Transverse colon (tissue), 4 donors: ENCODE measurements at regions of chr2 and their contacts with region 1.

Region 1: DNA sequence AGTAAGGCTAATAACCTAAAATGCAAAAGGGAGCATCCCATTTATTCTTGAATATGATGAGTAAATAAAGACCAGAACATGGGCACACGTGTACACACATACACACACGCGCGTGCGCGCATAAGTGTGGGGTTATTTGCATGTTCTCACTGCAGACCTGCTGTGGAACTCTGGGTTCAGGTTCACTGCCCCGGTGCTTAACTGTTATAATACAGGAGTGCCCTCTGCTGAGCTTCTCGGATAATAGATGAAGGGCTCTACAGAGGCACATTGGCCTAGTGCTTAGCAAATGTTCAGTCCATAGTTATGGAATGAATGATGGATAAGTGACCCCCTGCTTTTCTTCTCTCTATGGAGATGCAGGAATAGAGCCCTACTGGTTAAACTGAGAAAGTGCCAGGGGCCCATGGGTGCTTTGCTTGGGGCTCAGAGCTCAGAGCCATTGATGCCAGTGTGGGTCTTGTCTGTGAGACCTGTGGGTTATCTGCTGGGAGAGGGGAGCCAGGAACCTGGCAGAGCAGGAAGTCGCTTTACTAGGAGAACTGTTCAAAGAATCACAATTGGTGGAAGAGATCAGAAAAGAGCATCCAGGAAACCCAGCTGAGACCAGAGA is 3.6 kb upstream of the ARL4C start:
- DNase-seq: peak; percentile 66
- H3K4me3 ChIP-seq: no peak overlapping the region
- H3K27ac ChIP-seq: no peak overlapping the region
- H3K4me1 ChIP-seq: peaks cover under 1 to 14% (median 8%) of the 10 kb centered on the region in 4 donors
- H3K27me3 ChIP-seq: peaks cover 15% of the 10 kb centered on the region
- CTCF ChIP-seq: peak; percentile 48 to 57 (median 54)
- EP300 ChIP-seq: no peak
- POLR2A ChIP-seq: no peak

Region 2: DNA sequence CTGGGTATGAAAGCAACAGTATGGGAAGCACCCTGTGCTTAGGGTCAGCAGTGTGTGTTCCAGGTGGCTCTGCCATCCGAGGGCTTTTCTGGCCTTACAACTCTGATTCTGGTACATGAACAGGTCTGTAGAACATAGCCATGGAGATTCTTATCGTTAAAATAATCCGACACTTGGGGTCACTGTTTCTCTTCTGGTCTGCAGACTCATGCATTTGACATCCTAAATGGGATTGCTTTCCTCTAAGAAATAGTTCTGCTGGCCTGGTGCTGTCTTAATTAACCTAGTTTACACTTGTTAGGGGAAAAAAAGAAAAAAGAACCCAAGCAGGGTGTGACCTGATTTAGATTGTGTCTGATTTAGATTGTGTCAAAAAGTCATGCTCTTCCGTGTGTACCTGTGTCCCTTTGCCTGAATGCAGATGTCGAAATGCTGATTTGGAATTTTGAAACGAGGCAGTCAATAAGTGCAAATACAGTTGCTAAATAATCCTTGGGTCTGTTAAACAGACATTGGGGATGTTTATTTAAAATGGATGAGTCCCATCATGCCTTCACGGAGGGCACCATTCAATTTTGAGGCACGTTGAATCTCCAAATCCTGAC is 523.7 kb before region 1 on chr2:
- in situ Hi-C with region 1: loop called in 2 of 4 experiments (anchors 25 kb)
- intact Hi-C with region 1: no loop called
- DNase-seq: no peak
- H3K4me3 ChIP-seq: no peak overlapping the region
- H3K27ac ChIP-seq: no peak overlapping the region
- H3K4me1 ChIP-seq: no peaks in the 10 kb centered on the region
- H3K27me3 ChIP-seq: no peaks in the 10 kb centered on the region
- CTCF ChIP-seq: peak in 4 of 5 experiments; percentile 18 to 35 (median 26)
- EP300 ChIP-seq: no peak
- POLR2A ChIP-seq: no peak

Region 3: DNA sequence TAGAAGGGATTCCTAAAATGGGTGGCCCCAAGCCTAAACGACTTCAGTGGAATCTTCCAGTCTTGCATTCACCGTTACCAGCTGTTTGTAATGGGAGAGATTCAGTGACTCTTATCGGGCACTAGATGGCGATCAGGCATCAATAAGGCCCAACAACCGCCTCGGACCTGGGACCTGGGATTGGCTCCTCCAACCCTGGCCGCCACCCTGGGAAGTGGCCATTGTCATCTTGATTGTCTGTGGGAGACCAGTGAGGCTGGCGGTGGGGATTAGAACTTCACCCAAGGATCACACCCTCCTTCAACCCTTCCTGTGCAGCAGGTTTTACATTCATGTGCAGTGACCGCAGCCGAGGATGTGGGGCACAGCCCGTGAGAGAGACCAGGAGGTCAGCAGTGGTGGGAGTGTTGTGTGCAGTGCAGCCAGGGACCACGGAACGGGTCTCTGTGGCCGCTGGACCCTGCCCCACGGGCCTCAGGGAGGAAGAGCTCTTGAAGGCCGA is 364.7 kb before region 1 on chr2:
- in situ Hi-C with region 1: loop called (anchors 5 to 10 kb)
- intact Hi-C with region 1: loop called (anchors 10 kb)
- DNase-seq: peak; percentile 62
- H3K4me3 ChIP-seq: no peak overlapping the region
- H3K27ac ChIP-seq: no peak overlapping the region
- H3K4me1 ChIP-seq: no peaks in the 10 kb centered on the region
- H3K27me3 ChIP-seq: peaks cover 5% of the 10 kb centered on the region
- CTCF ChIP-seq: peak; percentile 65 to 83 (median 76)
- EP300 ChIP-seq: no peak
- POLR2A ChIP-seq: no peak

Region 4: GRCh38 chr2:234142530-234142929 is 358.0 kb before region 1 on chr2:
- in situ Hi-C with region 1: loop called in 3 of 4 experiments (anchors 5 to 10 kb)
- intact Hi-C with region 1: loop called (anchors 10 kb)
- DNase-seq: no peak
- H3K4me3 ChIP-seq: no peak overlapping the region
- H3K27ac ChIP-seq: no peak overlapping the region
- H3K4me1 ChIP-seq: peaks cover 0 to 3% (median 0%) of the 10 kb centered on the region in 4 donors
- H3K27me3 ChIP-seq: peaks cover 5% of the 10 kb centered on the region
- CTCF ChIP-seq: no peak
- EP300 ChIP-seq: no peak
- POLR2A ChIP-seq: no peak

Region 5: GRCh38 chr2:234288974-234289455 is 211.5 kb before region 1 on chr2:
- in situ Hi-C with region 1: loop called in 3 of 4 experiments (anchors 10 to 25 kb)
- intact Hi-C with region 1: loop called (anchors 5 kb)
- DNase-seq: peak; percentile 77
- H3K4me3 ChIP-seq: no peak overlapping the region
- H3K27ac ChIP-seq: peak overlapping the region; percentile 47 to 74 (median 66)
- H3K4me1 ChIP-seq: peaks cover 12 to 60% (median 29%) of the 10 kb centered on the region in 4 donors
- H3K27me3 ChIP-seq: no peaks in the 10 kb centered on the region
- CTCF ChIP-seq: peak; percentile 72 to 80 (median 77)
- EP300 ChIP-seq: no peak
- POLR2A ChIP-seq: no peak